Naive thymus-derived CD4-positive, alpha-beta T cell (primary cell): ENCODE measurements at regions of chr5 and their contacts with region 1.

Region 1: DNA sequence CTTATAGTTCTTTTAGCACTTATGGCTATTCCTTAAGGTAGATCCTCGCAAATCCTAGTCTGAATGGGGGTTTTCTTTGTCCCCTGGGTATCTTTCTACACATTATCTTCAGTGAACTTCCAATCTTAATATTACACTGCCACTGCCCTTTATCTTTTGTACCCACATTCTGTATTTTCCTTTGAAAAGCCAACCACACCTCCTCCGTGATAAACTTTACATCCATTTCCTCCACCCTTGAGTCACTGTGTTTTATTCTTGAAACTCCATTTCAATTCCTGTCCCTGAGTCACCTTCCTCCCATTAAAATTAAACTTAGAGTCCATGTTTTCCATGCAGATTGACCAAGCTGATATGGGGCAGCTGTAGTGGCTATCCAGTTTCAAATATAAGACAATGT is 43.2 kb upstream of the RICTOR start:
- DNase-seq: no peak
- ATAC-seq: no peak
- H3K4me3 ChIP-seq: no peak overlapping the region
- H3K4me3 Mint-ChIP-seq: peak overlapping the region in 2 of 10 donors; percentile 36 to 47
- H3K27ac ChIP-seq: no peak overlapping the region
- H3K27ac Mint-ChIP-seq: peak overlapping the region in 8 of 9 donors; percentile 46 to 90 (median 78)
- H3K4me1 ChIP-seq: no peaks in the 10 kb centered on the region
- H3K4me1 Mint-ChIP-seq: peaks cover 12 to 58% (median 30%) of the 10 kb centered on the region in 7 donors
- H3K27me3 ChIP-seq: no peaks in the 10 kb centered on the region
- H3K27me3 Mint-ChIP-seq: no peaks in the 10 kb centered on the region

Region 2: GRCh38 chr5:38905516-38905915 is 211.9 kb before region 1 on chr5:
- CTCF ChIA-PET with region 1: no interaction called
- POLR2A ChIA-PET with region 1: no interaction called
- intact Hi-C with region 1: no loop called
- DNase-seq: no peak
- ATAC-seq: no peak
- H3K4me3 ChIP-seq: no peak overlapping the region
- H3K4me3 Mint-ChIP-seq: no peak overlapping the region
- H3K27ac ChIP-seq: no peak overlapping the region
- H3K27ac Mint-ChIP-seq: no peak overlapping the region
- H3K4me1 ChIP-seq: no peaks in the 10 kb centered on the region
- H3K4me1 Mint-ChIP-seq: peaks cover 0 to 2% (median 0%) of the 10 kb centered on the region in 7 donors
- H3K27me3 ChIP-seq: peaks cover 0 to 4% of the 10 kb centered on the region in 2 donors
- H3K27me3 Mint-ChIP-seq: peaks cover 2 to 34% (median 26%) of the 10 kb centered on the region in 5 donors

Region 3: DNA sequence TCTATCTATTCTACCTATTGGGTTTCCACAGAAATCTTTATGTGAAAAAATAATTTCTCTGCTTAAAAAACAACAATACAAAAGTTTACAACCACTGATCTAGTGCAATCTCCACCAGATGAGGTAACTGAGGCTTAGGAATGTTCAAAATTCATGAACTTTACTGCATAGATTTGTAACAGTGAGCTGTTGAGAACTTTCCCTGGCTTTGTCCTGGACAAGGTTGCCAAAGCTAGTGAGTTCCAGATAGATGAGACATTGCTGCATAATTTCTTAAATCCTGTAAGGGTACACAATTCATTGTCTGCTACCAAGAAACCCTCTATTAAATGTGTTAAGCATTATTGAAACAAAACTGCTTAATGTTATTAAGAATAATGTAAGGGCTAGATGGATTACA is 168.9 kb before region 1 on chr5:
- CTCF ChIA-PET with region 1: no interaction called
- POLR2A ChIA-PET with region 1: no interaction called
- intact Hi-C with region 1: loop called in 1 of 2 experiments (anchors 5 kb)
- DNase-seq: no peak
- ATAC-seq: no peak
- H3K4me3 ChIP-seq: no peak overlapping the region
- H3K4me3 Mint-ChIP-seq: no peak overlapping the region
- H3K27ac ChIP-seq: no peak overlapping the region
- H3K27ac Mint-ChIP-seq: peak overlapping the region in 1 of 9 donors; percentile 25
- H3K4me1 ChIP-seq: no peaks in the 10 kb centered on the region
- H3K4me1 Mint-ChIP-seq: peaks cover 0 to 13% (median 0%) of the 10 kb centered on the region in 7 donors
- H3K27me3 ChIP-seq: no peaks in the 10 kb centered on the region
- H3K27me3 Mint-ChIP-seq: no peaks in the 10 kb centered on the region

Region 4: GRCh38 chr5:39092581-39093350 is 24.6 kb before region 1 on chr5:
- CTCF ChIA-PET with region 1: no interaction called
- POLR2A ChIA-PET with region 1: no interaction called
- intact Hi-C with region 1: no loop called
- DNase-seq: no peak
- ATAC-seq: no peak
- H3K4me3 ChIP-seq: no peak overlapping the region
- H3K4me3 Mint-ChIP-seq: no peak overlapping the region
- H3K27ac ChIP-seq: no peak overlapping the region
- H3K27ac Mint-ChIP-seq: no peak overlapping the region
- H3K4me1 ChIP-seq: no peaks in the 10 kb centered on the region
- H3K4me1 Mint-ChIP-seq: peaks cover 0 to 5% (median 0%) of the 10 kb centered on the region in 7 donors
- H3K27me3 ChIP-seq: peaks cover 0 to 3% of the 10 kb centered on the region in 2 donors
- H3K27me3 Mint-ChIP-seq: peaks cover 0 to 30% (median 6%) of the 10 kb centered on the region in 5 donors

Region 5: DNA sequence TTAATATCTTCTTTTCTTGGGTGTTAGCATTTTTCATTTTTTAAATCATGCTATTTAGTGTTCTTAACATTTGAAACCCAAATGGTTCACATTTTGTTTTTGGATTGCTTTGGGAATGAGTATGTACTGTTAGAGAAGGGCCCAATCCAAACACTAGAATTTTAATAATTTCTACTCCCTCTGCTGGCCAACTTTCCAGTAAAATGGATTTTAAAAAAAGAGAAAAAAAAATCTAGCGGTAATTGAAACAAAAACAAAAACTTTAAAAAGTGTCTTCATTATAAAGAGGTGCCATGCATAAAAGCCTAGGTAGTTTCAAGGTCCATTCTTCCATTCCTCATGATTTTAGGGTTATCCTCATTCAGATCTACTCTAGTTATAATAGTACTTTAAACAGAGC is 11.1 kb before region 1 on chr5:
- CTCF ChIA-PET with region 1: no interaction called
- POLR2A ChIA-PET with region 1: interaction called, 3 read pairs
- intact Hi-C with region 1: loop called in 1 of 2 experiments (anchors 1 kb)
- DNase-seq: peak in 3 of 9 donors; percentile 5 to 29 (median 22)
- ATAC-seq: no peak
- H3K4me3 ChIP-seq: no peak overlapping the region
- H3K4me3 Mint-ChIP-seq: no peak overlapping the region
- H3K27ac ChIP-seq: peak overlapping the region; percentile 23
- H3K27ac Mint-ChIP-seq: peak overlapping the region in 7 of 9 donors; percentile 9 to 67 (median 51)
- H3K4me1 ChIP-seq: peaks cover 0 to under 1% of the 10 kb centered on the region in 2 donors
- H3K4me1 Mint-ChIP-seq: peaks cover 4 to 52% (median 28%) of the 10 kb centered on the region in 7 donors
- H3K27me3 ChIP-seq: no peaks in the 10 kb centered on the region
- H3K27me3 Mint-ChIP-seq: no peaks in the 10 kb centered on the region

Region 6: DNA sequence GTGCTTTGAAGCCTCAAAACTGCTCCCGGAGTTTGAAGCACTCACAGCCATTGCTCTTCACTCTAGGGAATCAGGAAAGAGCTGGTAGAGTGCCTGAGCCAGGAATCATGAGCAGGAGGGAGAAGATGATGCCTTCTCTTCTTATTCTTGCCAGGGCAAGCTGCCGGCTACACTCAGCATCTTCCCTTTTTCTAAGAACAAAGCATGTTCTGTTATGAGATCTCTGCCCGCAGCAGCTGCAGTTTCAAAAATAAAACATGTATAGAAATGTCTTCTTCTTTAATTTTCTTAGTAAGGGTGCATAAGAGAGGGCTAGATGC is 14.7 kb after region 1 on chr5:
- CTCF ChIA-PET with region 1: no interaction called
- POLR2A ChIA-PET with region 1: no interaction called
- intact Hi-C with region 1: loop called in 1 of 2 experiments (anchors 1 kb)
- DNase-seq: no peak
- ATAC-seq: no peak
- H3K4me3 ChIP-seq: no peak overlapping the region
- H3K4me3 Mint-ChIP-seq: no peak overlapping the region
- H3K27ac ChIP-seq: peak overlapping the region; percentile 37
- H3K27ac Mint-ChIP-seq: peak overlapping the region in 8 of 9 donors; percentile 5 to 94 (median 80)
- H3K4me1 ChIP-seq: no peaks in the 10 kb centered on the region
- H3K4me1 Mint-ChIP-seq: peaks cover 12 to 82% (median 68%) of the 10 kb centered on the region in 7 donors
- H3K27me3 ChIP-seq: no peaks in the 10 kb centered on the region
- H3K27me3 Mint-ChIP-seq: no peaks in the 10 kb centered on the region

Region 7: DNA sequence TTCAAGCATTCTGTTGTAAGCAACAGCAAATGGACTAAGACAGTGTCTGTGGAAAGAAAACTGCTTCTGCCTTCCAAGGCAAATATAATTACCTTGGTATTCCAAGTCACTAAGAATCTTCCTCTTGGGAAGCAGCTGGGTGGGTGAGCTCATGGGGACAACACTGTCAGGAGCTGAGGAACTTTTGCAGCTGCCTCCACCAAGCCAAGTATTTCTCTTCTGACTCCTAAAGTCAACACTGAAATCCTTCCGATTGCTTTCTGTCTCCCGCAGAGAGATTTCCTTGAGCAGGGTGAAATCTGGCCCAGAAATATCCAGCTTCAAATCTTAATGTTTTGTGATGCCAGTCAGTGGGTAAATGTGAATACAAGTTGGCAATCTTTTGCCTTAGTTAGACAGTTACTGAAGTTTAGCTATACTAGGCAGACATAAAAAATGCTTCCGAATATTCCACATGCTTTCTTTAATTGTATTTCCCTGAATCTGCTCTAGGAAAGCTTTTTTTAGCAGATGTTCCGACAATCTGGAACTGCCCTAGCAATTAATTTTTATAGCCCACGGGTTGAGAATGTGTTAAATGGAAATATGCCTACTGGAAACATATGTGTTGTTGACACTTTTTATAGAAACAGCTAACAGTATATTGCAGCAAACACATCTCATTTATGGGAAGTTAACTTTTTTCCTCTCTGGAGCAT is 677.3 kb after region 1 on chr5:
- CTCF ChIA-PET with region 1: no interaction called
- POLR2A ChIA-PET with region 1: no interaction called
- intact Hi-C with region 1: no loop called
- DNase-seq: no peak
- ATAC-seq: no peak
- H3K4me3 ChIP-seq: no peak overlapping the region
- H3K4me3 Mint-ChIP-seq: no peak overlapping the region
- H3K27ac ChIP-seq: no peak overlapping the region
- H3K27ac Mint-ChIP-seq: no peak overlapping the region
- H3K4me1 ChIP-seq: no peaks in the 10 kb centered on the region
- H3K4me1 Mint-ChIP-seq: no peaks in the 10 kb centered on the region
- H3K27me3 ChIP-seq: no peaks in the 10 kb centered on the region
- H3K27me3 Mint-ChIP-seq: peaks cover 0 to 2% (median 0%) of the 10 kb centered on the region in 5 donors